Activated T-helper 1 cell treated with anti-CD3 and anti-CD28 coated beads, Interleukin-12 subunit alpha, Interleukin-12 subunit beta, Interleukin-2, Interleukin-4 antibody, amounts not matched to agents 30 ng/mL and 10 ng/mL and 1 ng/mL, durations not matched to agents 14 hours and 24 hours and 36 hours (primary cell): ENCODE measurements at regions of chr22 and their contacts with region 1.

Region 1: DNA sequence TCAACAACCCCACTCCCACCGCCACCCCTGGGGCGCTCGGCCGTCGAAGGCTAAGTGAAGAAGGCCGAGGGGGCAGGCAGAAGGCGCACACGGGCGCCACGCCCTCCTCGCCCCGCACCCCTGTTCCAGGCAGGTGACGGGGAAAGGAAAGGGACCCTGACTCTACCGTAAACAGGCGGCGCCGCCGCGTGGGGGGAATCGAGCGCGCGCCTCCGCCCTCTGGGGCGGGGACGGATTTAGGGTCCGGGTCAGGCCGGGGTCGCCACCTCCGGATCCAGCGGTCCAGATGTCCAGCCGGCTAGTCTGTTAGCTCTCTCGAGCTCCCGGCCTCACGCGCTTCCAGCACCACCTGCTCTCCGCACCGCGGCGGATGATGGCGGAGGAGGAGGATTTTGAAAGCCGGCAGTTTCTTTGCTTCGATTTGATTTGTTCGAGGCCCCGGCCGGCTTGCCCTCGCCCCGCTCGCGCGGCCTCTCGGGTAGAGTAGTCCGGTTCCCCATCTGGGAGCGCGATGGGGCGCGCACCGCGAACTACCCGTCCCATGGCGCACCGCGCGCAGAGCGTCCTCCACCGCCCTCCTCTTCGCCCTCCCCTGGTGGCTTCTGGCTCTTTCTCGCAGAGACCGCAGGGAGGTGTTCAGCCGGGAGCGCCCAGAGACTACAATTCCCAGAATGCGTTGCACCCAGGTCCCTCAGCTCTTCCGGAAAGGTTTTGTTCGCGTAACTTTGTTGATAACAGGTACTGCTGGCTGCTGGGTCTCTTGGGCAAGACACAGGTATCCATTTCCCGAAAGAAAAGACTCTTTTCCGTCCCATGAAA is at the start of gene RANGAP1:
- DNase-seq: peak; percentile 98
- H3K4me3 Mint-ChIP-seq: peak within 1 kb of the TSS; percentile 95
- H3K27ac Mint-ChIP-seq: peak within 1 kb of the TSS; percentile 97
- H3K4me1 Mint-ChIP-seq: peaks cover 34% of the 10 kb centered on the region
- H3K27me3 Mint-ChIP-seq: no peaks in the 10 kb centered on the region
- total RNA-seq, gene RANGAP1: 197 and 199 TPM in 2 replicates

Region 2: GRCh38 chr22:40818747-40819598 is 467.1 kb before region 1 on chr22 and contains the start of gene SLC25A17:
- intact Hi-C with region 1: loop called (anchors 1 kb)
- DNase-seq: peak; percentile 82
- H3K4me3 Mint-ChIP-seq: peak within 1 kb of the TSS; percentile 87
- H3K27ac Mint-ChIP-seq: peak within 1 kb of the TSS; percentile 93
- H3K4me1 Mint-ChIP-seq: peaks cover 33% of the 10 kb centered on the region
- H3K27me3 Mint-ChIP-seq: no peaks in the 10 kb centered on the region
- total RNA-seq, gene SLC25A17: 29.4 and 34.0 TPM in 2 replicates

Region 3: GRCh38 chr22:40939202-40939601 is 346.8 kb before region 1 on chr22:
- intact Hi-C with region 1: no loop called
- DNase-seq: no peak
- H3K4me3 Mint-ChIP-seq: no peak overlapping the region
- H3K27ac Mint-ChIP-seq: no peak overlapping the region
- H3K4me1 Mint-ChIP-seq: peaks cover 9% of the 10 kb centered on the region
- H3K27me3 Mint-ChIP-seq: no peaks in the 10 kb centered on the region

Region 4: GRCh38 chr22:40950962-40951794 is 334.9 kb before region 1 on chr22 and contains the start of gene RBX1:
- intact Hi-C with region 1: loop called (anchors 1 kb)
- DNase-seq: peak; percentile 98
- H3K4me3 Mint-ChIP-seq: peak within 1 kb of the TSS; percentile 98
- H3K27ac Mint-ChIP-seq: peak within 1 kb of the TSS; percentile 98
- H3K4me1 Mint-ChIP-seq: peaks cover 33% of the 10 kb centered on the region
- H3K27me3 Mint-ChIP-seq: no peaks in the 10 kb centered on the region
- total RNA-seq, gene RBX1: 90.9 and 94.4 TPM in 2 replicates

Region 5: GRCh38 chr22:41204992-41205900 is 80.8 kb before region 1 on chr22 and contains the start of gene L3MBTL2:
- intact Hi-C with region 1: loop called (anchors 1 kb)
- DNase-seq: peak; percentile 98
- H3K4me3 Mint-ChIP-seq: peak within 1 kb of the TSS; percentile 97
- H3K27ac Mint-ChIP-seq: peak within 1 kb of the TSS; percentile 94
- H3K4me1 Mint-ChIP-seq: peaks cover 21% of the 10 kb centered on the region
- H3K27me3 Mint-ChIP-seq: peaks cover 12% of the 10 kb centered on the region
- total RNA-seq, gene L3MBTL2: 51.9 and 56.6 TPM in 2 replicates

Region 6: GRCh38 chr22:41341990-41342389 is 56.0 kb after region 1 on chr22:
- intact Hi-C with region 1: loop called (anchors 1 kb)
- DNase-seq: peak; percentile 59
- H3K4me3 Mint-ChIP-seq: peak overlapping the region; percentile 15
- H3K27ac Mint-ChIP-seq: peak overlapping the region; percentile 75
- H3K4me1 Mint-ChIP-seq: peaks cover 23% of the 10 kb centered on the region
- H3K27me3 Mint-ChIP-seq: no peaks in the 10 kb centered on the region

Region 7: DNA sequence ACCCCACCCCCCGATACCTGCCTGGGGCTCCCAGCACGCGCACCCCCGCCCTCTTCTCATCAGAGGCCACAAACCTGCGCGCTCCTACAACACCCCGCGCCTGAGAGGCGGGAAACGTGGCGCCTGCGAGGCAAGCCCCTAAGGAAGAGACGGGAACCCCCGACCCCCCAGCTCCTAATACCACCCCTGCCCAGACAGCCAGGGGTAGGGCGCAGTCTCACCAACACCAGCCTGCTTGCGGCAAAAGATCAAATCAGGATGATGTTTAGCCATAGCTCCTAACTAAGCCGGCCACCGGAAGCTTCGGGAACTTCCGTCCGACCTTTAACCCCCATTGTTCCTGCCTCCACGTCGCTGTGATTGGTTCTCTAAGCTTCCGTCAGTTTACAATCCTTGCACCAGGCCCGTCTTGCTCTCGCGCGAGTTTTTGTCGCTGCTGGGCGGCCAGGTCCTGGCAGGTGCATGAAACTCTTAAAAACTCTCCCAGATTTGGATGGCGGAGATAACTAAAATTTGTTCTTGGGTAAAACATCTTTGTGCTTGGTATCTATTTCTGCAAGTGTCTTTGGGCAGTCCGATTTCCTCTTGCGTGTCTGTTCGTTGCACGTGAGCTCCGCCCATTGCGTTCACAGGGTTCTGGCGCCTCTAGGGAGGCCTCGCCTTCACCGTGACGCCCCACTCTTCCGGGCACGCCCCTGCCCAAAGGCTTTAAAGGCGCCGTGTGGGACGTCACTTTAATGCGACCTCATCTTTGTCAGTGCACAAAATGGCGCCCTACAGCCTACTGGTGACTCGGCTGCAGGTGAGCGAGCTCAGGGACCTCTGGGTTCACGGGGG is 182.6 kb after region 1 on chr22 and contains the starts of genes ACO2 and PHF5A:
- intact Hi-C with region 1: loop called (anchors 1 kb)
- DNase-seq: peak; percentile 98
- H3K4me3 Mint-ChIP-seq: peak within 1 kb of the TSS; percentile 87
- H3K27ac Mint-ChIP-seq: peak within 1 kb of the TSS; percentile 99
- H3K4me1 Mint-ChIP-seq: peaks cover 22% of the 10 kb centered on the region
- H3K27me3 Mint-ChIP-seq: no peaks in the 10 kb centered on the region
- total RNA-seq, gene ACO2: 99.1 and 101 TPM in 2 replicates
- total RNA-seq, gene PHF5A: 83.7 and 96.8 TPM in 2 replicates

Region 8: GRCh38 chr22:41589391-41590241 is 303.6 kb after region 1 on chr22 and contains the start of gene PMM1:
- intact Hi-C with region 1: loop called (anchors 1 kb)
- DNase-seq: peak; percentile 100
- H3K4me3 Mint-ChIP-seq: peak within 1 kb of the TSS; percentile 92
- H3K27ac Mint-ChIP-seq: peak within 1 kb of the TSS; percentile 82
- H3K4me1 Mint-ChIP-seq: peaks cover 17% of the 10 kb centered on the region
- H3K27me3 Mint-ChIP-seq: no peaks in the 10 kb centered on the region
- total RNA-seq, gene PMM1: 21.4 and 22.6 TPM in 2 replicates